GM10248 (cell line): ENCODE measurements at regions of chr13 and their contacts with region 1.

Region 1: GRCh38 chr13:98542568-98543377 is 34.1 kb downstream of the STK24 start:
- DNase-seq: peak; percentile 52
- CTCF ChIP-seq: no peak

Region 2: GRCh38 chr13:98098516-98098915 is 444.3 kb before region 1 on chr13:
- CTCF ChIA-PET with region 1: no interaction called
- POLR2A ChIA-PET with region 1: no interaction called
- DNase-seq: no peak
- CTCF ChIP-seq: no peak

Region 3: GRCh38 chr13:98528663-98529570 is 13.9 kb before region 1 on chr13:
- CTCF ChIA-PET with region 1: interaction called, 28 read pairs
- POLR2A ChIA-PET with region 1: interaction called, 3 read pairs
- DNase-seq: no peak
- CTCF ChIP-seq: no peak

Region 4: GRCh38 chr13:98556968-98557631 is 14.3 kb after region 1 on chr13:
- CTCF ChIA-PET with region 1: interaction called, 15 read pairs
- POLR2A ChIA-PET with region 1: no interaction called
- DNase-seq: no peak
- CTCF ChIP-seq: no peak